Aorta (tissue), 5 donors: ENCODE measurements at regions of chr2 and their contacts with region 1.

Region 1: DNA sequence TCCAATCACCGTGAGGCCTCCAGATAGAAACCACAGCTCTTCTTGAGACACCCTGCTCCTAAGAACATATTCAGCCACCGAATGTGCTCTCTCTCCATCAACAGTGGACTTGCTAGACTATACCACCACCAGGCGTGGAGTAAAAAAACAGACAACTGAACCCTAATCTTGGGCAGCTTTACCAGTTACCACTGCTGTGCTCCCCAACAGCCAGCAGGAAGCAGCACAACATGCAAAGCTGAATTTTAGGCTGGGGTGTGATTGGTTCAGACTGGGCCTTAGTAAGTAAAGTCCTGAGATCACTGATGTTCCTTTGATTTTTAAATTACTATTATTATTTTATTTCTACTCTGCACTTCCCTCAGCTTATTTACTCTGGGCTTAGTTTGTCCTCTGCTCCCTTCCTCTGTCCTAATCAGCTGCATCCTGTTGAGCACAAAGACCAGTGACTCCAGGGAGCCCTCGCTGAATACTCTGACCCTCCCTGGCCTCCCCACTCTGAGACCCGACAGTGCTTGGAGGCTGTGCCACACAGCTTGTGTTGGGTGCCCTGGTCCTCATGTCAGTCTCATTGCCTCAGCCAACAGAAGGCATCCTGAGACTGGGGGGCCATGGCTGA is 21.9 kb downstream of the MRPL35 start:
- DNase-seq: peak in 1 of 2 donors; percentile 66
- ATAC-seq: no peak
- H3K4me3 ChIP-seq: no peak overlapping the region
- H3K27ac ChIP-seq: peak overlapping the region in 1 of 2 donors; percentile 16
- H3K4me1 ChIP-seq: peaks cover 1 to 3% of the 10 kb centered on the region in 2 donors
- H3K27me3 ChIP-seq: no peaks in the 10 kb centered on the region

Region 2: GRCh38 chr2:86298411-86299379 is 77.5 kb after region 1 on chr2:
- intact Hi-C with region 1: loop called in 1 of 2 experiments (anchors 5 kb)
- DNase-seq: no peak
- ATAC-seq: peak; percentile 58
- H3K4me3 ChIP-seq: no peak overlapping the region
- H3K27ac ChIP-seq: peak overlapping the region in 1 of 2 donors; percentile 74
- H3K4me1 ChIP-seq: no peaks in the 10 kb centered on the region
- H3K27me3 ChIP-seq: no peaks in the 10 kb centered on the region

Region 3: GRCh38 chr2:86368161-86368824 is 147.1 kb after region 1 on chr2:
- intact Hi-C with region 1: loop called (anchors 1 to 2 kb)
- DNase-seq: peak in 1 of 2 donors; percentile 52
- ATAC-seq: peak; percentile 58
- H3K4me3 ChIP-seq: no peak overlapping the region
- H3K27ac ChIP-seq: no peak overlapping the region
- H3K4me1 ChIP-seq: no peaks in the 10 kb centered on the region
- H3K27me3 ChIP-seq: no peaks in the 10 kb centered on the region

Region 4: DNA sequence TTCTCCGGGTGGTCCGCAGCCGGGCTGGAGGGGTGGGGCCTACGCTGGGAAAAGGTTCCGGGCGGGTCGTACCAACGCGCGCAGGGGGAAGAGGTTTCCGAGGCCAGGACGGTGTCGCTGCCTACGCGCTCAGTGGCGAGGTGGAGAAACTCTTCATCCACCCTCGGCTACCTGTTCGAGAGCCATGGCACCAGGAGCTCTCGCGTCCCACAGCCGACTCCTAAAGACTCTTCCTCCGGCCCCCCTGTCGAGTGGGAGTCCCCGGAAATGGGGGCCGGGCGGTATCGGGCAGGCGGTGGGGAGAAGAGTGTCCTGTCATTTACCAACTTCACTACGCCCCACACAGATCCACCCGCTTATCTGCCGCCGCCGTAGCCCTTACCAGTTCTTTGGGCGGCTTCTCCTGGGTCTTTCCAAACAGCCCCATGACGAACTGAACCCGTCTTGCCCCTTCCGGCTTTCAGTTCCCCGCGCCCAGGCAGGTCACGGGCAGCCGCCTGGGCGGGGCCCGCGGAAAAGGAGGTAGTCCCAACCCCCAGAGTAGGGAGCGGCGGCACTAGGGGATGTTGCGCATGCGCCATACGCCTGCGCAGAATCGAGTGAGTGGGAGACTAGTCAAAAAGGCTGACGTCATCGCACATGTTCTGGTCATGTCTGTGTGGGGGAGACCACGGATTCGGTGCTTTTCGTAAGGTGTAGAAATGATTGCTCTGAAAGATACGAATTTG is 341.9 kb after region 1 on chr2 and contains the start of gene CHMP3:
- intact Hi-C with region 1: loop called in 1 of 2 experiments (anchors 10 kb)
- DNase-seq: peak; percentile 98 to 99
- ATAC-seq: peak; percentile 99
- H3K4me3 ChIP-seq: peak within 1 kb of the TSS; percentile 66 to 90
- H3K27ac ChIP-seq: peak within 1 kb of the TSS; percentile 83 to 97
- H3K4me1 ChIP-seq: peaks cover 0 to 6% of the 10 kb centered on the region in 2 donors
- H3K27me3 ChIP-seq: no peaks in the 10 kb centered on the region
- total RNA-seq, gene CHMP3: 137 to 154 TPM